Naive thymus-derived CD8-positive, alpha-beta T cell (primary cell): ENCODE measurements at regions of chr17 and their contacts with region 1.

Region 1: DNA sequence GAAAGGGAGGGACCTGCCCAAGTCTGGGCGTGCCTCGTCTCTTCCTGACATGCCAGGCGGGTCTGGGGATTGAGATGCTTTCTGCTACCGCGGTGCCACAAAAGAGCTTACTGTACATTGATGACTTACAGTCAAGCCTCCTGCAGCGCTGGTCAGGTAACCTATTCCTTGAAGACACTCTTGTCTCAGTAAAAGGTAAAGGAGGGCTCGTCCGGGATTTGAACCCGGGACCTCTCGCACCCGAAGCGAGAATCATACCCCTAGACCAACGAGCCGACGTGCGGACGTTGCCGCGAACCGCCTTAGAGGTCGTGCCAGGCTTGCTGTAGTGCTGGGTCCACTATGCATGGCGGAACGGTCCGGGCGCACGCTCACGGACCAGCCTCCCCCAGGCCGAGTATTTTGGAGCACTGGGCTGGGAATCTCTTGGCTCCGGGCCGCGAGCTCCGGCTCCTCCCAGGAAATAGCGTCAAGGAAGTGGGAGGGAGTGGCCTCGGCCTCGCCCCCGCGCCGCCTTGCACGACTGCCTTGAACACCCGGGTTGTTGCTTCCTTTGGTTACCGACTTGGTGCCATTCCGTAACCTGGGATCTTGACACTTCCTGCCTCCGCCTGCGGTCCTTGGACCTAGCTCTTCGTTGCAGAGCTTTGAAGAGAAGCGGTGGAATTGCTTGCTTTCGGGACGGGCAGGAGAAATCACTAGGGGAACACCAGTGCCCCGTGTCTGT is 12.4 kb upstream of the AURKB start:
- DNase-seq: peak; percentile 80 to 96 (median 90)
- ATAC-seq: peak; percentile 45 to 47
- H3K4me3 Mint-ChIP-seq: peak overlapping the region; percentile 91 to 99 (median 96)
- H3K27ac Mint-ChIP-seq: peak overlapping the region; percentile 93 to 100 (median 98)
- H3K4me1 Mint-ChIP-seq: peaks cover 43 to 72% (median 66%) of the 10 kb centered on the region in 4 donors
- H3K27me3 Mint-ChIP-seq: peaks cover 0 to 19% (median 0%) of the 10 kb centered on the region in 5 donors

Region 2: DNA sequence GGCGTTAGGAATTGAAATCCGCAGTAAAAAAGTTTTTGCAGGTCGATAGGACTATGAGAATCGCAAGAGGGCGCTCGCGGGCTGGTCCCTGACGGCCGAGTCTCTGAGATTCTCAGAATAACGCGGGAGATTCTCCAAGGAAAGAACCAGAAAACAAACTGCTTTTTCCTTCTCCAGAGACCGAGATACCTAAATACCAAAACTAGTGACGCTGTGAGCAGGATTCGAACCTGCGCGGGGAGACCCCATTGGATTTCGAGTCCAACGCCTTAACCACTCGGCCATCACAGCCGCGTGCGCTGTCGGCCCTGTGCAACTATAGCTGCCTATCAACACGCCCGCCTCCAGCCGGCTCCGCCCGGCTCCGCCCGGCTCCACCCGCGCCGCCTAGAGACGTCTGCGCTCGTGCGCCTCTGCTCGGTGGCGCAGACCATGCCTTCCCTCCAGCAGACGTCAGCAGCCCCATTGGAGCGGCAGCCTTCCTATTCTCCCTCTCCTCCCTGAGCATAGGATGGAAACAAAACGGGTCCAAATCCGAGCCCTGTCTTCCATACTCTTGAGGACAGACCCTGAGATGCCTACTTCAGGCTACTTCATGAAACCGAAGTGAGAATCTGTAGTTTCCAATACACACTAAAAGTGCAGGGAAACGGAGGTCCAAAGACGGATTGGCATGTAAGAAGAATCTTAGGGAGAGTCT is 84.0 kb before region 1 on chr17:
- POLR2A ChIA-PET with region 1: interaction called, 55 read pairs
- DNase-seq: peak; percentile 87 to 99 (median 97)
- ATAC-seq: peak; percentile 86 to 87
- H3K4me3 Mint-ChIP-seq: no peak overlapping the region
- H3K27ac Mint-ChIP-seq: no peak overlapping the region
- H3K4me1 Mint-ChIP-seq: peaks cover 0 to 18% (median 7%) of the 10 kb centered on the region in 4 donors
- H3K27me3 Mint-ChIP-seq: peaks cover 0 to 5% (median 0%) of the 10 kb centered on the region in 5 donors

Region 3: GRCh38 chr17:8173056-8173870 is 49.5 kb before region 1 on chr17:
- POLR2A ChIA-PET with region 1: interaction called, 32 read pairs
- DNase-seq: peak; percentile 43 to 95 (median 83)
- ATAC-seq: peak; percentile 81 to 85
- H3K4me3 Mint-ChIP-seq: peak overlapping the region; percentile 84 to 95 (median 92)
- H3K27ac Mint-ChIP-seq: peak overlapping the region; percentile 99 to 100 (median 100)
- H3K4me1 Mint-ChIP-seq: peaks cover 20 to 61% (median 52%) of the 10 kb centered on the region in 4 donors
- H3K27me3 Mint-ChIP-seq: no peaks in the 10 kb centered on the region

Region 4: GRCh38 chr17:8209909-8210760 is 12.7 kb before region 1 on chr17 and contains the start of gene AURKB:
- POLR2A ChIA-PET with region 1: interaction called, 118 read pairs
- DNase-seq: peak; percentile 85 to 98 (median 91)
- ATAC-seq: peak; percentile 100
- H3K4me3 Mint-ChIP-seq: peak within 1 kb of the TSS; percentile 88 to 96 (median 95)
- H3K27ac Mint-ChIP-seq: peak within 1 kb of the TSS; percentile 79 to 96 (median 89)
- H3K4me1 Mint-ChIP-seq: peaks cover 13 to 21% (median 15%) of the 10 kb centered on the region in 4 donors
- H3K27me3 Mint-ChIP-seq: no peaks in the 10 kb centered on the region
- polyA plus RNA-seq, gene AURKB: not detected

Region 5: DNA sequence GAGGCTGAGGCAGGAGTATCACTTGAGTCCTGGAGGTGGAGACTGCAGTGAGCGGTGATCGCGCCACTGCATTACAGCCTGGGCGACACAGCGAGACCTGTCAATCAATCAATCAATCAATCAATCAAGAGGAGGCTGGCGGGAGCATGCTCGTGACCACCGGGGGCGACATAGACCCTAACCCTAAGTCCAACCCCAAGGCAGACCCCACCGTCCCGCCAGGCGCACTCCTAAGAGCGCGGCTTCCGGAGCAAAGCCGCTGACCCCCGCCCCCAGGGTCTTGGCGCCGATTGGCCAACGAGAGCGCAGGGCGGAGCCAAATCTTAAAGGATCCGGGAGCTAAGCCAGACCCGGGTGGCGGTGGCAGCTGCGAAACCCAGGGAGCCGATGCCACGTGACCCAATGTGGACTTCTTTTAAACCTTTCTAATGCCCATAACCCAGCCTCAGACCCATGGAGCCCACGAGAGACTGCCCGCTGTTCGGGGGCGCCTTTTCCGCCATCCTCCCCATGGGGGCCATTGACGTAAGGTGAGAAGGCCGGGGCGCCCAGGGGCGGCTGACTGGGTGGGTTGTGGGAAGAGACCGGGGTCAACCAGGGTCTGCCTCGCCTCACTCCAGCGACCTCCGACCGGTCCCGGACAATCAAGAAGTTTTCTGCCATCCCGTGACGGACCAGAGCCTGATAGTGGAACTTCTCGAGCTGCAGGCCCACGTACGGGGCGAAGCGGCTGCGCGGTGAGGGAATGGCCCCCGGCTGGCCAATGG is 65.7 kb after region 1 on chr17 and contains the start of gene RANGRF:
- POLR2A ChIA-PET with region 1: interaction called, 20 read pairs
- DNase-seq: peak; percentile 61 to 87 (median 74)
- ATAC-seq: peak; percentile 94 to 96
- H3K4me3 Mint-ChIP-seq: peak within 1 kb of the TSS; percentile 93 to 99 (median 96)
- H3K27ac Mint-ChIP-seq: peak within 1 kb of the TSS; percentile 89 to 99 (median 96)
- H3K4me1 Mint-ChIP-seq: peaks cover 15 to 58% (median 35%) of the 10 kb centered on the region in 4 donors
- H3K27me3 Mint-ChIP-seq: no peaks in the 10 kb centered on the region
- polyA plus RNA-seq, gene RANGRF: 67.2 to 79.6 (median 78.7) TPM

Region 6: GRCh38 chr17:8376271-8377067 is 153.7 kb after region 1 on chr17 and contains the start of gene KRABD2:
- POLR2A ChIA-PET with region 1: interaction called, 10 read pairs
- DNase-seq: peak; percentile 85 to 94 (median 88)
- ATAC-seq: peak; percentile 98 to 99
- H3K4me3 Mint-ChIP-seq: peak within 1 kb of the TSS; percentile 64 to 96 (median 91)
- H3K27ac Mint-ChIP-seq: peak within 1 kb of the TSS; percentile 43 to 96 (median 92)
- H3K4me1 Mint-ChIP-seq: peaks cover 15 to 61% (median 51%) of the 10 kb centered on the region in 4 donors
- H3K27me3 Mint-ChIP-seq: no peaks in the 10 kb centered on the region